ENCODE measurements at regions of chr11 and their contacts with region 1.

Region 1: GRCh38 chr11:65919146-65920033 is at the start of gene DRAP1:
- DNase-seq: peak; percentile 82
- H3K4me3 ChIP-seq: peak within 1 kb of the TSS; percentile 92
- CTCF ChIP-seq: no peak

Region 2: GRCh38 chr11:65900125-65900898 is 19.1 kb before region 1 on chr11 and contains the start of gene FOSL1:
- CTCF ChIA-PET with region 1: interaction called, 7 read pairs
- POLR2A ChIA-PET with region 1: interaction called, 37 read pairs
- DNase-seq: peak; percentile 73
- H3K4me3 ChIP-seq: peak within 1 kb of the TSS; percentile 98
- CTCF ChIP-seq: no peak

Region 3: GRCh38 chr11:65906602-65907001 is 12.8 kb before region 1 on chr11:
- CTCF ChIA-PET with region 1: interaction called, 7 read pairs
- POLR2A ChIA-PET with region 1: interaction called, 32 read pairs
- DNase-seq: no peak
- H3K4me3 ChIP-seq: no peak overlapping the region
- CTCF ChIP-seq: no peak

Region 4: GRCh38 chr11:66183494-66184048 is 264.2 kb after region 1 on chr11:
- CTCF ChIA-PET with region 1: no interaction called
- POLR2A ChIA-PET with region 1: no interaction called
- DNase-seq: no peak
- H3K4me3 ChIP-seq: no peak overlapping the region
- CTCF ChIP-seq: no peak

Region 5: DNA sequence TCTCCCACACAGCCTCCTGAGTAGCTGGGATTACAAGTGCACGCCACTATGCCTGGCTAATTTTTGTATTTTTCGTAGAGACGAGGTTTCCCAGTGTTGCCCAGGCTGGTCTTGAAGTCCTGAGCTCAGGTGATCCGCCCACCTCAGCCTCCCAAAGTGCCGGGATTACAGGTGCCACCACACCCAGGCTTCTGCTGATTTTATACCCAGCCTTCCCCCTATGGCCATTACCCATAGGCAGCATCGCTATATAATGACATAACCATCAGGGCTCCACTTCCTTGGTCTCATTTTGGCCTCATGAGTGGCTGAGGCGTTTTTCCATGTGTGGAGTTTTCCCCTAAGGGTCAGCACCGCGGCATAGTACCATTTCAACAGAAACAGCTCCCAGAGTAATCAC is 288.5 kb after region 1 on chr11:
- CTCF ChIA-PET with region 1: no interaction called
- POLR2A ChIA-PET with region 1: no interaction called
- DNase-seq: no peak
- H3K4me3 ChIP-seq: no peak overlapping the region
- CTCF ChIP-seq: no peak